ENCODE measurements at regions of chr5 and their contacts with region 1.

Region 1: DNA sequence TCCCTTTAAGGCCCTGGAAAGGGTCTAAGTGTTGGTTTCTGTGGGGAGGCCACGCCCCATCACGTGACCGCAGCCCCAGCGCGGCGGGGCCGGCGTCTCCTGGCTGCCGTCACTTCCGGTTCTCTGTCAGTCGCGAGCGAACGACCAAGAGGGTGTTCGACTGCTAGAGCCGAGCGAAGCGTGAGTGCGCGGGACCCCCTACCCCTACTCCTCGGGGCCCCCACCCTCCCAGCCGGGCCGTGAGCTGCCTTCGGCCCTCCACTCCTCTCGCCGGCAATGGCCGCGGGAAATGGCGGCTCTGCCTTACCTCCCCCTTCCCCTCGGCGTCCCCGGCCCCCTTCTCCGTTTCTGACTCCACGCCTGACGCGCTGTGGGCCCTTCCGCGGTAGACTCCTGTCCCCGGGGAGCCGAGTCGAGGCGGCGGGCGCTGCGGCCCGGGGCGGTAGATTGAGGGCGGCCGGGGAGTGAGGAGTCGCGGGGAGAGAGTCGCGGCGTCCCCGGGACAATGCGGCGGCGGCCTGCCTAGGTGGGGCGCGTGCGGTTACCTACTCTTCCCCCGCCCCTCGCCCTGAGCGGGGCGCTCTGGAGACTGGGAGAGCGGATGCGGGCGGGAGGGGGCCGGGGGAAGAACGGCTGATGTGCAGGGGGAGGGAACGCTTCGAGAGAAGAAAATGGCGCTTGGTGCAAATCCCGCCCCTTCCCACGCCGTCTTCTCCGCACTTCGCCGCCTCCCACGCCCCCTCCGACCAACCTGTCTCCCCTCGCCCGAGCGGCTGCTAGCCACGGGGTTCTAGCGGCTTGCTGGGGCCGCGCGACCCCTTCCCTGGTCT is at the start of gene SUB1:
- DNase-seq: peak; percentile 80 to 90
- ATAC-seq: peak; percentile 90 to 95
- H3K4me3 ChIP-seq: peak within 1 kb of the TSS; percentile 81 to 100 (median 98)
- H3K27ac ChIP-seq: peak within 1 kb of the TSS; percentile 96 to 100 (median 100)
- H3K4me1 ChIP-seq: peaks cover 14 to 21% of the 10 kb centered on the region in 2 donors
- H3K27me3 ChIP-seq: no peaks in the 10 kb centered on the region
- CTCF ChIP-seq: no peak
- POLR2A ChIP-seq: peak; percentile 86 to 88
- total RNA-seq, gene SUB1: 82.6 to 162 (median 100) TPM

Region 2: GRCh38 chr5:32174011-32174870 is 411.4 kb before region 1 on chr5 and contains the start of gene GOLPH3:
- in situ Hi-C with region 1: loop called in 1 of 4 experiments (anchors 25 kb)
- intact Hi-C with region 1: loop called (anchors 2 kb)
- DNase-seq: peak; percentile 86 to 87
- ATAC-seq: peak; percentile 82 to 83
- H3K4me3 ChIP-seq: peak within 1 kb of the TSS; percentile 73 to 99 (median 82)
- H3K27ac ChIP-seq: peak within 1 kb of the TSS; percentile 94 to 100 (median 97)
- H3K4me1 ChIP-seq: peaks cover 19 to 39% of the 10 kb centered on the region in 2 donors
- H3K27me3 ChIP-seq: no peaks in the 10 kb centered on the region
- CTCF ChIP-seq: peak in 2 of 5 experiments; percentile 33 to 36
- POLR2A ChIP-seq: peak; percentile 91
- total RNA-seq, gene GOLPH3: 34.9 to 77.8 (median 46.1) TPM

Region 3: DNA sequence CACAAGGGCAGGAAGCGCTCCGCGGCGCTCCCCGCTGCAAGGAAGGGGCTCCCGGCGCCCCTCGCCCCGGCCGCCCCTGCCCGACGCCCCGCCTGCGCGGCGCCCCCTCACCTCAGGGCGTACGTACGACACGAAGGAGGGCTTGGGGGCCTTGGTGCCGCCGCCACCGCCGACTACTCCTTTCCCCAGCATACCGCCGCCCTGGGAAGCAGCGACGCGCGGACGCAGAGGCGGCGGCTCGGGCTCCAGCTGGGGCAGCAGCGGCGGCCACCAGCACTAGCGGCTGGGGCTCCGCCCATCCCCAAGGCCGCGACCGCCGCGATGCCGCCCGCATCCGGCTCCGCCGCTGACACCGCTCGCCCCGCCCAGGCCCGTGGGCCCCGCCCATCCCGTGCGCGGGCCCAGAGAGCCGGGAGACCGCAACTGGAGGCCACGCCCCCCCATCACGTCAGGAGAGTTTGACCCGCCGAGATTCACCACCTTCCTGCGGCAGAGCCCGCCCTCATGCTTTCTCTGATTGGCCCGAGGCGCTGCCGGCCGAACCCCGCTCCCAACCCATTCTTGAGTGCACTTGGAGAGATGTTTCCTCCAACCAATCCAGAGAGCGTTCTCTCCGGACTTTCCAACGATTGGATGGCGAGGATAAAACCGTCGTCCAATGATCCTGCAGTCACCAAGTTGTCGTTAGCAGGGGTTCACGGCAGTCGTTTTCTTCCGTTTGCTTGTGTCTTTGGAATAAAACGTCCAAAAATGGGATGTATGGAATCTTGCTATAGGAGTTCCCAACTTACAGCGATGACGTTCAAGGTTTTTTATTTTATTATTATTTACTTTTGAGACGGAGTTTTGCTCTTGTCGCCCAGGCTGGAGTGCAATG is 272.8 kb before region 1 on chr5 and contains the start of gene MTMR12:
- in situ Hi-C with region 1: no loop called
- intact Hi-C with region 1: loop called (anchors 2 kb)
- DNase-seq: peak; percentile 99
- ATAC-seq: peak; percentile 97 to 98
- H3K4me3 ChIP-seq: peak within 1 kb of the TSS; percentile 69 to 88 (median 82)
- H3K27ac ChIP-seq: peak within 1 kb of the TSS; percentile 85 to 98 (median 92)
- H3K4me1 ChIP-seq: peaks cover 10 to 33% of the 10 kb centered on the region in 2 donors
- H3K27me3 ChIP-seq: no peaks in the 10 kb centered on the region
- CTCF ChIP-seq: no peak
- POLR2A ChIP-seq: peak; percentile 88 to 91
- total RNA-seq, gene MTMR12: 6.4 to 11.5 (median 10.6) TPM

Region 4: GRCh38 chr5:32489791-32490582 is 95.7 kb before region 1 on chr5:
- in situ Hi-C with region 1: loop called in 1 of 4 experiments (anchors 5 kb)
- intact Hi-C with region 1: loop called (anchors 1 kb)
- DNase-seq: peak; percentile 41 to 55
- ATAC-seq: peak; percentile 54 to 66
- H3K4me3 ChIP-seq: no peak overlapping the region
- H3K27ac ChIP-seq: no peak overlapping the region
- H3K4me1 ChIP-seq: peaks cover 0 to 2% of the 10 kb centered on the region in 2 donors
- H3K27me3 ChIP-seq: no peaks in the 10 kb centered on the region
- CTCF ChIP-seq: peak; percentile 53 to 77 (median 71)
- POLR2A ChIP-seq: no peak

Region 5: DNA sequence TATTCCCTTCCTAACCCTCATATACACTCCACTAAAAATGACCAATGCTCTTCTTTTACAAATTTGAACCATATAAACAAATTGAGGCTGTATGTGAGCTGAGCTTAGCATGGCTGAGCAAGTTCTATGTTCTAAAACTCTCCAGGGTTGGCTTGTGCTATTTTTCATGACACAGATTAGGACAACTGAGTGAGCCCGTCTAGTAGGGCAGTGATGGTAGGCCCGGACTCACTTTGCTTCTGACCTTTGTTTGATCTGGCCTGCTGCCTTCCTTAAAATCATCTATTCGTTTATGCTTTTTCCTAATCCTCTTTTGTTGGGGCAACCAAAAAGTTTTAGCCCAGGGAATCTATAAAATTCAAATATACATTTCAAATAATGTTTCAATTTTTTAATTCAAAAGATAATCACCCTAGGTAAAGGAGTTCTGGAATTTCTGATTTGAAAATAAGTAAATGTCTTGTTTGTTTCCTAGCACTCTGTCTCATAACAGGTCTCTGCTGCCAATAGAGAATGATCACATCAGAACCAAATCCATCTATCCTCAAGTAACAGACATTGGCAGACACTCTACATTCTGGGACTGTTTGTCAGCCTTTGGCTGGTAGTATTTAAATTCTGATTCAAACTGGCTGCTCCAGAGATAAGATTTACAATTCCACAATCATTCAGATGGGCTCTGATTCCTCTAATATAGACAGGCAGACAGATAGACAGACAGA is 638.1 kb after region 1 on chr5:
- in situ Hi-C with region 1: no loop called
- intact Hi-C with region 1: no loop called
- DNase-seq: no peak
- ATAC-seq: peak in 1 of 2 donors; percentile 52
- H3K4me3 ChIP-seq: no peak overlapping the region
- H3K27ac ChIP-seq: peak overlapping the region in 1 of 4 donors; percentile 49
- H3K4me1 ChIP-seq: peaks cover 9 to 11% of the 10 kb centered on the region in 2 donors
- H3K27me3 ChIP-seq: no peaks in the 10 kb centered on the region
- CTCF ChIP-seq: no peak
- POLR2A ChIP-seq: no peak

Region 6: DNA sequence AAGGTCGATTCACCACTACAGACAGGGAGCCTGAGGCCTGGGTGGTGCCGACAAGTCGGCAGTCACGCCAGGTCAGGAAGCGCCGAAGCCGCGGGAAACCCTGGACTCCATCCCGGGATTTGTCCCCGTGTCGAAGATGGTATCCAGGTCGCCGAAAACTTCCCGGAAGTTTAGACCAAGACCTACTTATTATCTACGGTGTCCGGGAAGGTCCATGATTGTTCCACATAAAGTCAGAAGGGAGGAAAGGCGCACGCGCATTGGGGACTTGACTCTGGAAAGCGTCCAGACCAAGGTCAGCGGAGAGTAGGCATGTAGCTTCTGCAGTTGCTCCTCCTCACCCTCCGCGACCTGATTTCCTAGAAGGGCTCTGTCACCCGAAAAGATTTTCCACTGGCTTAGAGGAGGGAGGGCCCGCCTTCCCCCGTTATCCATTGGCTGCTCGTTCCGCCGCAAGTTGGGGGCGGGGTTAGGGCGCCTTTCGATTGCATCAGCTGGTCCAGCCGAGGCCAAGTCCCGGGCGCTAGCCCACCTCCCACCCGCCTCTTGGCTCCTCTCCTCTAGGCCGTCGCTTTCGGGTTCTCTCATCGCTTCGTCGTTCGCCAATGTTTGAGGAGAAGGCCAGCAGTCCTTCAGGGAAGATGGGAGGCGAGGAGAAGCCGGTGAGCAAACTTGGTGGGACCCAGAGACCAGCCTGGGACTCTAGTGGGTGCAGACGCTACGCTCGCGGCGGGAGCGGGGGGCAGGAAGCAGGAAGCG is 855.0 kb after region 1 on chr5 and contains the start of gene TARS1:
- in situ Hi-C with region 1: loop called in 1 of 4 experiments (anchors 25 kb)
- intact Hi-C with region 1: no loop called
- DNase-seq: peak; percentile 99 to 100
- ATAC-seq: peak; percentile 96 to 98
- H3K4me3 ChIP-seq: peak within 1 kb of the TSS; percentile 70 to 97 (median 91)
- H3K27ac ChIP-seq: peak within 1 kb of the TSS; percentile 85 to 98 (median 96)
- H3K4me1 ChIP-seq: peaks cover 27 to 34% of the 10 kb centered on the region in 2 donors
- H3K27me3 ChIP-seq: no peaks in the 10 kb centered on the region
- CTCF ChIP-seq: peak in 1 of 5 experiments; percentile 21
- POLR2A ChIP-seq: peak; percentile 83 to 88
- total RNA-seq, gene TARS1: 62.8 to 77.6 (median 69.8) TPM